ENCODE measurements at regions of chr5 and their contacts with region 1.

Region 1: GRCh38 chr5:89930591-89931392 is 478.8 kb downstream of the CETN3 start:
- DNase-seq: no peak
- H3K4me3 ChIP-seq: no peak overlapping the region
- H3K27ac ChIP-seq: peak overlapping the region; percentile 43 to 52
- H3K4me1 ChIP-seq: peaks cover 0 to 10% of the 10 kb centered on the region in 2 donors
- H3K27me3 ChIP-seq: no peaks in the 10 kb centered on the region
- CTCF ChIP-seq: no peak

Region 2: DNA sequence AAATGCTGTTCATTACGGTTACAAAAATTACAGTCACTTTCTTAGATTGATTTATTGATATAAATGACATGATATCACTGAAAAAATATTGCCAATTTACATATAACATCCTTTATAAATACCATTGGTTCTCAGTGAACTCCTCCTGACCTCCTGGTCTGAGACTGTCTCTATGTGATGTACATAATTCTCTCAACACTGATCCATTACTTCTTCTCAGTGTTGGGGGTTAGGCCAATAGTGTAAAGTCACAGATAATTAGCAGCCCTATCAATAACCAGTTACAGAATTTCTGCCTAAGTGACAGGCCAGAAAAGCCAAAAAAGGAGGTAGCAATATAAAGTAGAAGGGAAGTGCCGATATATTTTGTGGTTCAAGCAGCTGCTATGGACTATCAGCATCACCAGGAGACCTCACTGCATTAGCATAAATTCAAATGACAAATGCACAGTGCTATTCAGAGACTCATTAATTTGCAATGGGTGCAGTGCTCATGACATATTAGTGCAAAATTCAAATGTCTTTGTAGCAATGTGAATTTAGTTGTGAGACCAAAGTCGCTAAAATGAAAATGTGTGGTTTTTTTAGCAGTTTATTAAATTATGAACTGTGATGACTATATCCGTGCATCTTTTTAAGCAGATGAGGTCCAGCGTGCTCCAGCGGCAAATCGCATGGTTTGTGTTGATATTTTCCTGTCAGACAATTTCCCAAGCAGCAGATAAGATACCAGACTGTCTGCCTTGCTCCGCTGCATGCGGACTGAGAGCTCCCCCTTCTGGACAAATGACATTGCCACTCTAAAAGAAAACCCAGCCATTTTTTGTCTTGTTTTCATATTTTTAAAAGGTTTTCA is 334.1 kb after region 1 on chr5:
- intact Hi-C with region 1: loop called (anchors 10 kb)
- DNase-seq: peak in 1 of 2 donors; percentile 71
- H3K4me3 ChIP-seq: peak overlapping the region in 1 of 2 donors; percentile 29
- H3K27ac ChIP-seq: no peak overlapping the region
- H3K4me1 ChIP-seq: peaks cover 0 to 12% of the 10 kb centered on the region in 2 donors
- H3K27me3 ChIP-seq: no peaks in the 10 kb centered on the region
- CTCF ChIP-seq: peak; percentile 75 to 94 (median 92)